ENCODE measurements at regions of chr20 and their contacts with region 1.

Region 1: GRCh38 chr20:8722276-8722928 is 346.5 kb upstream of the PLCB4 start:
- DNase-seq: peak; percentile 7
- H3K4me3 ChIP-seq: no peak overlapping the region
- H3K27ac ChIP-seq: no peak overlapping the region
- H3K4me1 ChIP-seq: no peaks in the 10 kb centered on the region
- H3K27me3 ChIP-seq: no peaks in the 10 kb centered on the region
- CTCF ChIP-seq: peak; percentile 69 to 75 (median 75)

Region 2: DNA sequence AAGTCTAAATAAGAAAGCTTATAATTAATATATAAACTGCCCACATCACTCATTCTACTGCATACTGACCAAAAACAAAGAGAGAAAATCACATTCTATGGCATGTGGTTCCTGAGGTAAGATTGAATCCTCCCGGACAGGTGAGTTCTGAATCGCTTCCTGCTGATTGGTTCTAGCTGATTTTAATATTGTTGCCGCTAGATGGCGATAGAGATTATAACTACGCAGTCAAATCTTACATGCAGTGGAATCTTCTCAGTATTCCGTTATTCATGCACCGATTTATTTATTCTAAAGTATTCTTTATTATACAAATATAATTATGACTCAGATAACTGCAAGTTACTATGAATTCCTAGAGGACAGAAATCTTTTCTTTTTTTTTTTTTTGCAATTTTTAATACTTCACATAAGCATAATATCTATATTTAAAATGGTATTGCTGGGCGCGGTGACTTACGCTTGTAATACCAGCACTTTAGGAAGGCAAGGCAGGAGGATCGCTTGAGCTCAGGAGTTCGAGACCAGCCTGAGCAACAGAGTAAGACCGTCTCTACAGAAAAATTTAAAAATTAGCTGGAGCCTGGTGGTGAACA is 678.6 kb before region 1 on chr20:
- dilution Hi-C with region 1: loop called (anchors 25 kb)
- DNase-seq: peak; percentile 1
- H3K4me3 ChIP-seq: no peak overlapping the region
- H3K27ac ChIP-seq: no peak overlapping the region
- H3K4me1 ChIP-seq: no peaks in the 10 kb centered on the region
- H3K27me3 ChIP-seq: no peaks in the 10 kb centered on the region
- CTCF ChIP-seq: peak; percentile 36 to 56 (median 47)